ENCODE measurements at regions of chr17 and their contacts with region 1.

Region 1: DNA sequence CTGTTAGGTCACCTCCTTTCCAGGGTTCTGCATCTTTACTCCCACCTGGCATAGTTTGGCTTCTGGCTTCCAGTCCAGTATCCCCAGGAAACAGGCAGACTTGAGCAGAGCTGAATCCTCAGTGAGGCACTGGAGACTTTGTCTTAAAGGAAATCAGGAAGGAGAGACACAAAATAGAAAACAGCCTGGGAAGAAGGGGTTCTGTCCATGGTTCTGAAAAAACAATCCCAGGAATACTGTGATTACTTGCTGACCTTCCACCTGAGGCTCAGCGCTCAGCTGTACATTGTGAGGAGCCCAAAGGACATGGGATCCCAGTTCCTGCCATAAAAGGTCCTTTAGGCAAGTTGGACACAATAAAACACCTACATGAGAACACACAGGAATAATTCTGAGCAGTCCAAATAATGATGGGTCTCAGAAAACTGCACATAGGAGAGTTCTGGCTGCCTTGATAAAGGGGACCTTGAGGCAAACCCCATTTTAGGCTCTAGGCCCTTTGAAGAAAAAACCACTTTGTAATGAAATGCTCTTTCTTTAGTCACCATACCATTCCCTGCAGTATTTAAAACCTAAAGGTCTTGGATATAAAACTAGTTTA is 81.4 kb upstream of the CRHR1 start:
- DNase-seq: peak; percentile 28
- H3K4me3 Mint-ChIP-seq: no peak overlapping the region
- H3K27ac Mint-ChIP-seq: no peak overlapping the region
- H3K4me1 Mint-ChIP-seq: peaks cover 36% of the 10 kb centered on the region
- H3K27me3 Mint-ChIP-seq: peaks cover 32% of the 10 kb centered on the region
- CTCF ChIP-seq: no peak

Region 2: DNA sequence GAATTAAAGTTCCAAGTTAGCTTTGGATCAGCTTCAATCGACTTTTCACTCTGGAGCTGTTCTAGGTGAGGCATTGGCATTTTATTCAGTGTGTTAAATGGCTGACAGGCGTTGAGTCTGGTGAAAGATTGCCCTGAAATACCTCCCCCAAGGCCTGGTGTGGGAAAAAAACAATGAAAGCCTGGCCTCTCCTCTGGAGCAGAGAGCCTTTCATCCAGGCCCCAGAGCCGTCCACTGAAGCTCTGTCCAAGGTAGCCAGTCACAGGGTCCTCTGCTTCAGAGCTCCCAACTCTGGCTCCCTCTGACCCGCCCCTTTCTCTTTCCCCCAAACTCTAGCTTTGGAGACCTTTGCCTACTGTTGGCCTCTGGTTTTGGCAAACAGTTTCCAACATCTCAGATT is 42.3 kb before region 1 on chr17:
- CTCF ChIA-PET with region 1: no interaction called
- intact Hi-C with region 1: loop called (anchors 5 kb)
- DNase-seq: no peak
- H3K4me3 Mint-ChIP-seq: no peak overlapping the region
- H3K27ac Mint-ChIP-seq: no peak overlapping the region
- H3K4me1 Mint-ChIP-seq: no peaks in the 10 kb centered on the region
- H3K27me3 Mint-ChIP-seq: peaks cover 65% of the 10 kb centered on the region
- CTCF ChIP-seq: no peak

Region 3: DNA sequence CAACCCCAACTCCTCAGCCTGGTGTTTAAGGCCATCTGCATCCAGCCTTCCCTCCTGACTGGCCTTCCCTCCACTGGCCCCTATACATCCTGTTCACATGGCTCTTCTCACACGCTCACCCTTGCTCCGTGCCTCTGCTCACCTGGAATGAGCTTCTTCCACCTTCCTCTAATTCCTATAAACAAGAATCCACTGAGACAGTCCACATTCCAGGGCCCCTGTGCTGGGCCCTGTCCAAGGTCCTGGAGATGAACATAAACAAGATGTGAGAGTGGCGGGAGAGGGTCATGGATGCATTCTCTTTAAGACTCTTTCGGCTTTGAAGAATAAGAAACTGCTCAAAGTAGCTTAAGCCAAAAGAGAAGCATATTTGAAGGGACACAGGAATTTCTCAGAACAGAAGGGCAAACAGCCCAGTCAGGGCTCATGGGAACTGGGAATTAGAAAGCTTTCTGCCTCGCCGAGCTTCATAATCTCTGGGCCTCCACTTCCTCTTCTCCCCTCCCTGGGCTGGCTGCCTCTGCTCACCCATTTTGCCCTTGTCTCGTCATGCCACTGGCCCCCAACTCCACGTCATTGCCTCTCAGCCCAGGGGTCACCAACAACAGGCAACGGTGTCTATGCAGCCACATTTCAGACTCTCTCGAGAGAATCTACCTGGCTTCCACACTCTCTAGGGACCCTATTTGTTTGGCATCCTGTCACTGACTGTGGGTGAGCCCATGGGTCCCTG is 155.4 kb after region 1 on chr17:
- CTCF ChIA-PET with region 1: no interaction called
- intact Hi-C with region 1: loop called (anchors 1 kb)
- DNase-seq: peak; percentile 60
- H3K4me3 Mint-ChIP-seq: no peak overlapping the region
- H3K27ac Mint-ChIP-seq: no peak overlapping the region
- H3K4me1 Mint-ChIP-seq: no peaks in the 10 kb centered on the region
- H3K27me3 Mint-ChIP-seq: peaks cover 88% of the 10 kb centered on the region
- CTCF ChIP-seq: no peak